ENCODE measurements at regions of chr1 and their contacts with region 1.

Region 1: GRCh38 chr1:52683367-52683940 is 14.7 kb downstream of the COA7 start:
- DNase-seq: no peak
- H3K4me3 Mint-ChIP-seq: no peak overlapping the region
- H3K27ac Mint-ChIP-seq: no peak overlapping the region
- H3K4me1 Mint-ChIP-seq: peaks cover 5% of the 10 kb centered on the region
- H3K27me3 Mint-ChIP-seq: no peaks in the 10 kb centered on the region
- CTCF ChIP-seq: no peak

Region 2: GRCh38 chr1:51897699-51898031 is 785.8 kb before region 1 on chr1:
- CTCF ChIA-PET with region 1: no interaction called
- POLR2A ChIA-PET with region 1: no interaction called
- intact Hi-C with region 1: loop called (anchors 5 kb)
- DNase-seq: peak; percentile 76
- H3K4me3 Mint-ChIP-seq: no peak overlapping the region
- H3K27ac Mint-ChIP-seq: no peak overlapping the region
- H3K4me1 Mint-ChIP-seq: peaks cover 25% of the 10 kb centered on the region
- H3K27me3 Mint-ChIP-seq: no peaks in the 10 kb centered on the region
- CTCF ChIP-seq: no peak

Region 3: GRCh38 chr1:52365746-52366516 is 317.5 kb before region 1 on chr1 and contains the start of gene CC2D1B:
- CTCF ChIA-PET with region 1: no interaction called
- POLR2A ChIA-PET with region 1: interaction called, 3 read pairs
- intact Hi-C with region 1: loop called (anchors 2 kb)
- DNase-seq: peak; percentile 98
- H3K4me3 Mint-ChIP-seq: peak within 1 kb of the TSS; percentile 99
- H3K27ac Mint-ChIP-seq: peak within 1 kb of the TSS; percentile 95
- H3K4me1 Mint-ChIP-seq: peaks cover 21% of the 10 kb centered on the region
- H3K27me3 Mint-ChIP-seq: no peaks in the 10 kb centered on the region
- CTCF ChIP-seq: no peak
- total RNA-seq, gene CC2D1B: 28.4 and 29.5 TPM in 2 replicates

Region 4: GRCh38 chr1:52436817-52437216 is 246.6 kb before region 1 on chr1:
- CTCF ChIA-PET with region 1: interaction called, 3 read pairs
- POLR2A ChIA-PET with region 1: no interaction called
- intact Hi-C with region 1: loop called (anchors 10 kb)
- DNase-seq: no peak
- H3K4me3 Mint-ChIP-seq: no peak overlapping the region
- H3K27ac Mint-ChIP-seq: no peak overlapping the region
- H3K4me1 Mint-ChIP-seq: no peaks in the 10 kb centered on the region
- H3K27me3 Mint-ChIP-seq: no peaks in the 10 kb centered on the region
- CTCF ChIP-seq: no peak

Region 5: GRCh38 chr1:52520148-52520547 is 163.3 kb before region 1 on chr1:
- CTCF ChIA-PET with region 1: interaction called, 10 read pairs
- POLR2A ChIA-PET with region 1: interaction called, 3 read pairs
- intact Hi-C with region 1: no loop called
- DNase-seq: no peak
- H3K4me3 Mint-ChIP-seq: no peak overlapping the region
- H3K27ac Mint-ChIP-seq: no peak overlapping the region
- H3K4me1 Mint-ChIP-seq: peaks cover 11% of the 10 kb centered on the region
- H3K27me3 Mint-ChIP-seq: no peaks in the 10 kb centered on the region
- CTCF ChIP-seq: no peak

Region 6: DNA sequence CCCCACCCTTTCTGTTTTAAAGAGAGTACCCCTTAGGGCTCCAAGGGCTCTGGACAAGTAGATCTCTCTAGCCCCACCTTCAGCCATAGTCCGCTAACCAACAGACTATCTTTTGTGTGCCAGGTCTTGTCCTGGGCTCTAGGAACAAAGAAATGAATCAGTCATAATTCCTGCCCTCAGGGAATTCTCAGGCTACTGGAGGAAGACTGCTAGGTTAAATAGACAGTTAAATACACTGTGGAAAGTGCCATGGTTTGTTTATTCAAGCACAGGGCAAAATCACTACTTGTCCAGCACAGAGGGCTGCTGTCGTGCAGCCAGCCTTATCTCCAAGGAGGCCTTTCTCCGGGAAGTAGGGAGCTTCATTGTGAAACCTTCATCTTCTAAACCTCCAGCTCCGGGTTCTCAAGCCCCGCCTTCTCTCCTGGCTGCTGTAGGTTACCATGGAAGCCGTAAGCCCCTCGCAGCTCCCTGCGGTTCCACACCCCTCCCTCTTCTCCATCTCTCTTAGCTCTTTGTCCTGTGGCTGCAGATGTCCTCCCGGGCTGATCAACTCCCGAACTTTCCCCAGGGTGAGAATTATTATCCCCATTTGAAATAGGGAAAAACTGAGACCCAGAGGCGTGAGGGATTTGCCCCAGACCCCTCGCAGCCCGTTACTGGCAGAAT is 20.7 kb before region 1 on chr1:
- CTCF ChIA-PET with region 1: interaction called, 30 read pairs
- POLR2A ChIA-PET with region 1: interaction called, 40 read pairs
- intact Hi-C with region 1: no loop called
- DNase-seq: peak; percentile 98
- H3K4me3 Mint-ChIP-seq: peak overlapping the region; percentile 64
- H3K27ac Mint-ChIP-seq: peak overlapping the region; percentile 68
- H3K4me1 Mint-ChIP-seq: peaks cover 65% of the 10 kb centered on the region
- H3K27me3 Mint-ChIP-seq: no peaks in the 10 kb centered on the region
- CTCF ChIP-seq: no peak